ENCODE measurements at regions of chr19 and their contacts with region 1.

Region 1: GRCh38 chr19:42132851-42133528 is 744 bp upstream of the POU2F2 start:
- DNase-seq: peak; percentile 69 to 97 (median 85)
- ATAC-seq: peak; percentile 87
- H3K4me3 ChIP-seq: peak overlapping the region; percentile 81
- H3K4me3 Mint-ChIP-seq: peak overlapping the region; percentile 81 to 95 (median 92)
- H3K27ac ChIP-seq: peak overlapping the region; percentile 80
- H3K27ac Mint-ChIP-seq: peak overlapping the region; percentile 69 to 94 (median 87)
- H3K4me1 ChIP-seq: peaks cover 23 to 33% of the 10 kb centered on the region in 2 donors
- H3K4me1 Mint-ChIP-seq: peaks cover 54 to 79% (median 65%) of the 10 kb centered on the region in 7 donors
- H3K27me3 ChIP-seq: no peaks in the 10 kb centered on the region
- H3K27me3 Mint-ChIP-seq: no peaks in the 10 kb centered on the region

Region 2: DNA sequence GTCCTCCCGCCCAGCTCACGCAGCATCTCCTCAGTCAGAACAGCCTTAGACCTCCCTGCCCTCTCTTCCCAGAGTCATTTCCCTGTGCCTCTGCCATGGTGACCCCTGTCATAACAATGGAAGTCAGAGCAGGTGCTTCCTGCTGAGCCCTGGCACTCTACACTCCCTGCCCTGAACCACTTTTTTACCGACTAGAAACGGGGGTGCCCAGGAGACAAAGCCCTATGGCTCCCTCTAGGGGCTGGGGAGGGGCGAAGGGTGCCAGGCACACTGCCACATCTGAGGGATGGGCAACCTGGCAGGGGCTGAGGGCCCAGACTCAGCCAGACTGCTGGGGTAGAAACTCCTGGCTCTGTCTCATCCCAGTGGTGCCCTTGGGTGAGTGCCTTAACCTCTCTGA is 40.6 kb before region 1 on chr19:
- CTCF ChIA-PET with region 1: no interaction called
- POLR2A ChIA-PET with region 1: no interaction called
- intact Hi-C with region 1: no loop called
- DNase-seq: peak in 5 of 9 donors; percentile 19 to 49 (median 32)
- ATAC-seq: peak; percentile 77
- H3K4me3 ChIP-seq: no peak overlapping the region
- H3K4me3 Mint-ChIP-seq: peak overlapping the region in 1 of 10 donors; percentile 59
- H3K27ac ChIP-seq: no peak overlapping the region
- H3K27ac Mint-ChIP-seq: peak overlapping the region in 3 of 9 donors; percentile 51 to 87 (median 75)
- H3K4me1 ChIP-seq: no peaks in the 10 kb centered on the region
- H3K4me1 Mint-ChIP-seq: peaks cover 12 to 37% (median 25%) of the 10 kb centered on the region in 7 donors
- H3K27me3 ChIP-seq: no peaks in the 10 kb centered on the region
- H3K27me3 Mint-ChIP-seq: no peaks in the 10 kb centered on the region

Region 3: DNA sequence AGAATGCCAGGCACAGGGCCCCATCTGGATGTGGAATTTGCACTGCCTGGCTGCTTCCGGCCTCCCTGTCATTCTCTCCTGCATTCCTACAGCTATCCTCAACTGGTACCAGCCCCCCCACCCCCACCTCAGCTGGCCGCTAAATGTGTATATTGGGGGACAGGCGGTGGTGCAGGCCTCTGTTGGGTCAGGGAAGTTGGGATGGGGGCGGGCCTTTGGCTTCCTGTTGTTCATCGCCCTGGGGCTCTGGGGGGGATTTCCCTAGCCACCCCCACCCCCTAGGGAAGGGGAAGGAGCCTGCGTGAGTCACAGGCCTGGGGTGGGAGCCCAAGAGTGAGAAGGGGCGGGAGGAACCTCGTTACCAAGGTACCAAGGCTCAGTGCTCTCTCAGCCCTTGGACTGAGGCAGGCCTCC is 11.3 kb before region 1 on chr19:
- CTCF ChIA-PET with region 1: interaction called, 11 read pairs
- POLR2A ChIA-PET with region 1: interaction called, 14 read pairs
- intact Hi-C with region 1: loop called (anchors 1 kb)
- DNase-seq: peak; percentile 15 to 83 (median 41)
- ATAC-seq: peak; percentile 95
- H3K4me3 ChIP-seq: peak overlapping the region; percentile 44
- H3K4me3 Mint-ChIP-seq: peak overlapping the region; percentile 43 to 90 (median 72)
- H3K27ac ChIP-seq: peak overlapping the region; percentile 77
- H3K27ac Mint-ChIP-seq: peak overlapping the region; percentile 78 to 98 (median 93)
- H3K4me1 ChIP-seq: peaks cover 31 to 44% of the 10 kb centered on the region in 2 donors
- H3K4me1 Mint-ChIP-seq: peaks cover 30 to 70% (median 57%) of the 10 kb centered on the region in 7 donors
- H3K27me3 ChIP-seq: no peaks in the 10 kb centered on the region
- H3K27me3 Mint-ChIP-seq: no peaks in the 10 kb centered on the region

Region 4: DNA sequence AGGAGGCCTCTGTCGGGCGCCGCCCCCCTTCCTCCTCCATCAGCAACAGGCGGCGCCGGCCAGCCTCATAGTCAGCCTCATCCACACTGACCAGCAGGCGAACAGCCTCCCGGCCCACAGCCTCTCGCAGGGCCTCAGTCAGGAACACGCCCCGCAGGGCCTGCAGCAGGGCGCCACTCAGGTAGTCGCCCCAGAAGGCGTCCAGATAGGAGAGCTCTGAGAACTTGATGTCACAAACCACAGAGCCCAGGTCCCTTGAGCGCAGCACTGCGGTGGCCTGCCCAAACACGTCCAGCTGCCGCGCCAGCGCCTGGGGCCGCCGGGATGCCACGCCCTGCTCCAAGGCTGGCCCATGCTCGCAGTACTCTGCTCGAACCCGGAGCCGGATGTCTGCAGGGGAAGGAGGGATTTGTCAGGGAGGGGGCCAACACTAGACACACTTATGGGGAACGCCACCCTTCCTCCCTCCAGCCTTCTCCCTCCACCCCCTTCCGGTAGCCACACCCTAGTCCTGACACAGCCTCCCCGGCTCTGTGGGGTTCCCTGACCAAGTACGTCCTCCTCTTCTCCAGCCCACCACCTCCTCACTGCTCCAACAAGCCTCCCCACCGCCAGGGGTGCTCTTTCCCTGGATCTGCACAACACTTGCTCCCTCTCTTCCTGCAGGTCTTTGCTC is 66.6 kb after region 1 on chr19:
- CTCF ChIA-PET with region 1: interaction called, 5 read pairs
- POLR2A ChIA-PET with region 1: interaction called, 4 read pairs
- intact Hi-C with region 1: loop called (anchors 1 kb)
- DNase-seq: peak in 8 of 9 donors; percentile 40 to 69 (median 48)
- ATAC-seq: peak; percentile 49
- H3K4me3 ChIP-seq: peak overlapping the region; percentile 52
- H3K4me3 Mint-ChIP-seq: peak overlapping the region; percentile 78 to 97 (median 86)
- H3K27ac ChIP-seq: peak overlapping the region; percentile 82
- H3K27ac Mint-ChIP-seq: peak overlapping the region; percentile 84 to 96 (median 92)
- H3K4me1 ChIP-seq: peaks cover 71 to 75% of the 10 kb centered on the region in 2 donors
- H3K4me1 Mint-ChIP-seq: peaks cover 70 to 89% (median 80%) of the 10 kb centered on the region in 7 donors
- H3K27me3 ChIP-seq: no peaks in the 10 kb centered on the region
- H3K27me3 Mint-ChIP-seq: no peaks in the 10 kb centered on the region

Region 5: GRCh38 chr19:42268704-42269477 is 135.9 kb after region 1 on chr19 and contains the start of gene CIC:
- CTCF ChIA-PET with region 1: interaction called, 3 read pairs
- POLR2A ChIA-PET with region 1: no interaction called
- intact Hi-C with region 1: loop called in 1 of 2 experiments (anchors 1 kb)
- DNase-seq: peak; percentile 95 to 100 (median 99)
- ATAC-seq: peak; percentile 82
- H3K4me3 ChIP-seq: peak within 1 kb of the TSS; percentile 85
- H3K4me3 Mint-ChIP-seq: peak within 1 kb of the TSS in 1 of 10 donors; percentile 94
- H3K27ac ChIP-seq: peak within 1 kb of the TSS; percentile 96
- H3K27ac Mint-ChIP-seq: peak within 1 kb of the TSS in 4 of 9 donors; percentile 98 to 99 (median 99)
- H3K4me1 ChIP-seq: peaks cover 23 to 29% of the 10 kb centered on the region in 2 donors
- H3K4me1 Mint-ChIP-seq: peaks cover 8 to 31% (median 25%) of the 10 kb centered on the region in 7 donors
- H3K27me3 ChIP-seq: no peaks in the 10 kb centered on the region
- H3K27me3 Mint-ChIP-seq: no peaks in the 10 kb centered on the region
- total RNA-seq, gene CIC: 90.4 to 134 (median 102) TPM

Region 6: DNA sequence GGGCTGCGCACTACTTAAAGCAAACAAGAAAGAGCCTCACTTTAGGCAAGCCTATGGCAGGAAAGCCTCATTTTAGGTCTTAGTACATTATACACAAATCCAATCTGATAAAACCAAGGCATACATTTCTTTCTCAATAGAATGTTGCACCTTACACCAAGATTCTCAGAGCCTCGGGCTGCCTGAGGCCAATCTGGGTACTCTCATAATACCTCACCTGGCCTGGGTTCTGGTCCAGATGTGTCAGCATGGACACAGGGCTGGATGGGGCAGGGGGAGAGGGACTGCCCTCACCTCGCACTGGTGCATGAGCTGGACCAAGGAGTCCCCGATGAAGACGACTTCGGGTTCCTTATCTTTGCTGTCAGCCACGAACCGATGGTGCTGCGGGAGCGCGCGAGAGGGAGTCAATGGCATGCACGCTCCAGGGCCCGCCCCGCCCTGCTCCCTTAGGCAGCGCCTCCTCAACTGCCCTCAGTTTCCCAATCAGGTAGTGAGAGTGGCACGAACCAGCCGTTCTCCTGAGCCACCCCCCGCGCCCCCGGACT is 168.7 kb after region 1 on chr19 and contains the start of gene PRR19:
- CTCF ChIA-PET with region 1: interaction called, 6 read pairs
- POLR2A ChIA-PET with region 1: interaction called, 4 read pairs
- intact Hi-C with region 1: loop called (anchors 1 kb)
- DNase-seq: peak in 1 of 9 donors; percentile 21
- ATAC-seq: peak; percentile 8
- H3K4me3 ChIP-seq: peak within 1 kb of the TSS; percentile 85
- H3K4me3 Mint-ChIP-seq: peak within 1 kb of the TSS; percentile 83 to 92 (median 89)
- H3K27ac ChIP-seq: peak within 1 kb of the TSS; percentile 71
- H3K27ac Mint-ChIP-seq: peak within 1 kb of the TSS; percentile 64 to 94 (median 88)
- H3K4me1 ChIP-seq: peaks cover 11 to 16% of the 10 kb centered on the region in 2 donors
- H3K4me1 Mint-ChIP-seq: peaks cover 11 to 30% (median 23%) of the 10 kb centered on the region in 7 donors
- H3K27me3 ChIP-seq: no peaks in the 10 kb centered on the region
- H3K27me3 Mint-ChIP-seq: no peaks in the 10 kb centered on the region
- total RNA-seq, gene PRR19: 0.32 to 0.68 (median 0.38) TPM in 4 of 5 experiments, not detected in the other

Region 7: GRCh38 chr19:42423462-42424344 is 290.7 kb after region 1 on chr19:
- CTCF ChIA-PET with region 1: no interaction called
- POLR2A ChIA-PET with region 1: no interaction called
- intact Hi-C with region 1: loop called (anchors 1 kb)
- DNase-seq: peak; percentile 79 to 94 (median 94)
- ATAC-seq: peak; percentile 95
- H3K4me3 ChIP-seq: peak overlapping the region; percentile 70
- H3K4me3 Mint-ChIP-seq: peak overlapping the region; percentile 89 to 100 (median 98)
- H3K27ac ChIP-seq: peak overlapping the region; percentile 77
- H3K27ac Mint-ChIP-seq: peak overlapping the region; percentile 72 to 96 (median 87)
- H3K4me1 ChIP-seq: peaks cover 21 to 30% of the 10 kb centered on the region in 2 donors
- H3K4me1 Mint-ChIP-seq: peaks cover 30 to 46% (median 39%) of the 10 kb centered on the region in 7 donors
- H3K27me3 ChIP-seq: no peaks in the 10 kb centered on the region
- H3K27me3 Mint-ChIP-seq: peaks cover 0 to 4% (median 0%) of the 10 kb centered on the region in 5 donors

Measured in naive thymus-derived CD4-positive, alpha-beta T cell (primary cell).